ENCODE measurements at regions of chr15 and their contacts with region 1.

Region 1: GRCh38 chr15:51776952-51777574 is 25.7 kb downstream of the TMOD2 start:
- DNase-seq: peak; percentile 79
- ATAC-seq: peak; percentile 75
- H3K4me3 ChIP-seq: no peak overlapping the region
- H3K4me3 Mint-ChIP-seq: no peak overlapping the region
- H3K27ac ChIP-seq: no peak overlapping the region
- H3K27ac Mint-ChIP-seq: no peak overlapping the region
- H3K4me1 ChIP-seq: peaks cover 0 to 4% of the 10 kb centered on the region in 2 donors
- H3K4me1 Mint-ChIP-seq: peaks cover 13% of the 10 kb centered on the region
- H3K27me3 ChIP-seq: no peaks in the 10 kb centered on the region
- H3K27me3 Mint-ChIP-seq: no peaks in the 10 kb centered on the region
- CTCF ChIP-seq: peak; percentile 72

Region 2: DNA sequence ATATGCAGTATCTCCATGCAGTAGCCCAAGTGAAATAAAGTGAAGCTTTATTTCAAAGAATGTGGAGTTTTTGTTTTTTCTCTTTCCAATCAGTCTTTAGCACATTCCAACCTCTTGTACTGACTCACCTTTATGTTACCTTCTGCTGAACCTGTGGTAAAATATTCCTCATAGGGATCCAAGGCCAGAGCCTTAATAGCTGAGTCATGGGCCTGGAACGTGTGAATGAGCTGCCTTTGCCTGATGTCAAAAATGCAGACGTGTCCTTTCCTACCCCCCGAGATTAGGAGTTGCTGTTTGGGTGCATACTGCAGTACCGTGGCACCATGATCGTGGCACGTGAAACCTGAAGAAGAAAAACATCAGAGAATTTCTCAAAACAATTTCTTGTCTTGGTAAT is 327.1 kb before region 1 on chr15:
- CTCF ChIA-PET with region 1: no interaction called
- POLR2A ChIA-PET with region 1: no interaction called
- intact Hi-C with region 1: no loop called
- DNase-seq: no peak
- ATAC-seq: no peak
- H3K4me3 ChIP-seq: no peak overlapping the region
- H3K4me3 Mint-ChIP-seq: no peak overlapping the region
- H3K27ac ChIP-seq: no peak overlapping the region
- H3K27ac Mint-ChIP-seq: no peak overlapping the region
- H3K4me1 ChIP-seq: no peaks in the 10 kb centered on the region
- H3K4me1 Mint-ChIP-seq: no peaks in the 10 kb centered on the region
- H3K27me3 ChIP-seq: no peaks in the 10 kb centered on the region
- H3K27me3 Mint-ChIP-seq: no peaks in the 10 kb centered on the region
- CTCF ChIP-seq: no peak

Region 3: GRCh38 chr15:51622604-51623370 is 154.3 kb before region 1 on chr15 and contains the start of gene DMXL2:
- CTCF ChIA-PET with region 1: interaction called, 20 read pairs
- POLR2A ChIA-PET with region 1: no interaction called
- intact Hi-C with region 1: no loop called
- DNase-seq: peak; percentile 72
- ATAC-seq: peak; percentile 65
- H3K4me3 ChIP-seq: peak within 1 kb of the TSS; percentile 54 to 70 (median 67)
- H3K4me3 Mint-ChIP-seq: peak within 1 kb of the TSS; percentile 88
- H3K27ac ChIP-seq: no peak within 1 kb of the TSS
- H3K27ac Mint-ChIP-seq: peak within 1 kb of the TSS; percentile 50
- H3K4me1 ChIP-seq: peaks cover 17 to 28% of the 10 kb centered on the region in 2 donors
- H3K4me1 Mint-ChIP-seq: peaks cover 28% of the 10 kb centered on the region
- H3K27me3 ChIP-seq: peaks cover 0 to 9% (median 0%) of the 10 kb centered on the region in 4 experiments
- H3K27me3 Mint-ChIP-seq: peaks cover 8% of the 10 kb centered on the region
- CTCF ChIP-seq: no peak
- total RNA-seq, gene DMXL2: 5.6 and 6.2 TPM in 2 replicates

Region 4: DNA sequence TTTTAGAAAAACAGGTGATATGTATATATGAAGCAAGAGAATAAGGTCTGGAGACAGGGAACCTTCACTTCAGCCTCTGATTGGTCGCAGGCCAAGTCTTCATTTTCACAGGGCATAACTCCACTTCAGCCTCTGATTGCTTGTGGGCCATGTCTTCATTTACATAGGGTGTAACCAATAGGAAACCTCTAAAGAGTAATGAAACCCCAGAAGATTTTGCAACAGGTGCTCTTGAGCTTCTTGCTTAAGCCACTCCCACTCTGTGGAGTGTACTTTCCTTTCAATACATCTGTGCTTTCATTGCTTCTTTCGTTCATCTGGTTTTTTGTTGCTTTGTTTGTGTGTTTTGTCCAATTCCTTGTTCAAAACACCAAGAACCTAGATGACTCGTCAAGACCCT is 118.4 kb before region 1 on chr15:
- CTCF ChIA-PET with region 1: interaction called, 728 read pairs
- POLR2A ChIA-PET with region 1: no interaction called
- intact Hi-C with region 1: no loop called
- DNase-seq: no peak
- ATAC-seq: no peak
- H3K4me3 ChIP-seq: no peak overlapping the region
- H3K4me3 Mint-ChIP-seq: no peak overlapping the region
- H3K27ac ChIP-seq: no peak overlapping the region
- H3K27ac Mint-ChIP-seq: no peak overlapping the region
- H3K4me1 ChIP-seq: no peaks in the 10 kb centered on the region
- H3K4me1 Mint-ChIP-seq: no peaks in the 10 kb centered on the region
- H3K27me3 ChIP-seq: no peaks in the 10 kb centered on the region
- H3K27me3 Mint-ChIP-seq: no peaks in the 10 kb centered on the region
- CTCF ChIP-seq: no peak

Region 5: GRCh38 chr15:51681303-51681963 is 95.6 kb before region 1 on chr15 and contains the start of gene SCG3:
- CTCF ChIA-PET with region 1: interaction called, 17 read pairs
- POLR2A ChIA-PET with region 1: no interaction called
- intact Hi-C with region 1: no loop called
- DNase-seq: peak; percentile 62
- ATAC-seq: peak; percentile 61
- H3K4me3 ChIP-seq: no peak within 1 kb of the TSS
- H3K4me3 Mint-ChIP-seq: no peak within 1 kb of the TSS
- H3K27ac ChIP-seq: no peak within 1 kb of the TSS
- H3K27ac Mint-ChIP-seq: no peak within 1 kb of the TSS
- H3K4me1 ChIP-seq: peaks cover 4 to 7% of the 10 kb centered on the region in 2 donors
- H3K4me1 Mint-ChIP-seq: no peaks in the 10 kb centered on the region
- H3K27me3 ChIP-seq: peaks cover 3 to 22% (median 19%) of the 10 kb centered on the region in 4 experiments
- H3K27me3 Mint-ChIP-seq: peaks cover 54% of the 10 kb centered on the region
- CTCF ChIP-seq: no peak
- total RNA-seq, gene SCG3: not detected in 2 replicates

Region 6: DNA sequence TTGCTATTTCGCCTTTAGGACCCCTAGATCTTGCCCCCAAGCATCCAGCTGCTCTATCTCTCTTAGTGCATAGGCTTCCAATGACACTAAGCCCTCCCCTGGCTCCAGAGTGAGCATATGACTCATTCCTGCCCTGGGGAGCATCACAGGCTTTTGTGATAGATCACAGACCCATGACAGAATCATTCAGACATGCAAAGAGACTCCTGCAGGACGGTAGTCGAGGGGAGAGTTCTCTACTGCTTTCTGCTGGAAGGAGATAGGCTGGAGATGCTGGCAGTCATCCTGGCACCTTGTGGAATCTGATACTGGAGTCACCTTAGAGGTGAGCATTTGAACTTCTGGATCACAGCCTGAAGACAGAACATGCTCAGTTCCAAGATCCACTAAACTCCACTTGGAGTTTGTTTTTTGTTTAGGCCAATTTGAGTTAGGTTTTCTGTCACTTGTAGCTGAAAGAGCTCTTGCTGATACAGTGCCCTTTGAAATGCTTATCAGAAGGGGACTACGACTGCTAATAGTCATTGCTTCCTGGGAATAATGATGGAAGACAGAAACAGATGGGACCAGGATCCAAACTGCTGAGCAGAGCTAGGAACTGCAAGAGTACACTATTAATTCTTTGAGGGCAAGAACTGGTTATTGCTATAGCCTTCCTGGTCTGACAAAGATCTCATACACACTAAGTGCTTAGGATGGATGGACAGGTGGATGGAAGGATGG is 50.6 kb before region 1 on chr15:
- CTCF ChIA-PET with region 1: interaction called, 58 read pairs
- POLR2A ChIA-PET with region 1: no interaction called
- intact Hi-C with region 1: loop called (anchors 1 kb)
- DNase-seq: peak; percentile 6
- ATAC-seq: peak; percentile 92
- H3K4me3 ChIP-seq: no peak overlapping the region
- H3K4me3 Mint-ChIP-seq: peak overlapping the region; percentile 32
- H3K27ac ChIP-seq: no peak overlapping the region
- H3K27ac Mint-ChIP-seq: peak overlapping the region; percentile 27
- H3K4me1 ChIP-seq: peaks cover 55 to 66% of the 10 kb centered on the region in 2 donors
- H3K4me1 Mint-ChIP-seq: peaks cover 75% of the 10 kb centered on the region
- H3K27me3 ChIP-seq: no peaks in the 10 kb centered on the region
- H3K27me3 Mint-ChIP-seq: no peaks in the 10 kb centered on the region
- CTCF ChIP-seq: no peak

Region 7: GRCh38 chr15:51737280-51738017 is 39.6 kb before region 1 on chr15 and contains the start of gene LYSMD2:
- CTCF ChIA-PET with region 1: interaction called, 78 read pairs
- POLR2A ChIA-PET with region 1: interaction called, 16 read pairs
- intact Hi-C with region 1: no loop called
- DNase-seq: peak; percentile 82
- ATAC-seq: peak; percentile 67
- H3K4me3 ChIP-seq: peak within 1 kb of the TSS; percentile 68 to 93 (median 73)
- H3K4me3 Mint-ChIP-seq: peak within 1 kb of the TSS; percentile 98
- H3K27ac ChIP-seq: peak within 1 kb of the TSS; percentile 87 to 89
- H3K27ac Mint-ChIP-seq: peak within 1 kb of the TSS; percentile 95
- H3K4me1 ChIP-seq: peaks cover 49 to 53% of the 10 kb centered on the region in 2 donors
- H3K4me1 Mint-ChIP-seq: peaks cover 55% of the 10 kb centered on the region
- H3K27me3 ChIP-seq: no peaks in the 10 kb centered on the region
- H3K27me3 Mint-ChIP-seq: no peaks in the 10 kb centered on the region
- CTCF ChIP-seq: no peak
- total RNA-seq, gene LYSMD2: 48.2 and 49.4 TPM in 2 replicates

Region 8: GRCh38 chr15:51759557-51760070 is 17.4 kb before region 1 on chr15:
- CTCF ChIA-PET with region 1: interaction called, 35 read pairs
- POLR2A ChIA-PET with region 1: no interaction called
- intact Hi-C with region 1: no loop called
- DNase-seq: no peak
- ATAC-seq: no peak
- H3K4me3 ChIP-seq: no peak overlapping the region
- H3K4me3 Mint-ChIP-seq: no peak overlapping the region
- H3K27ac ChIP-seq: no peak overlapping the region
- H3K27ac Mint-ChIP-seq: no peak overlapping the region
- H3K4me1 ChIP-seq: no peaks in the 10 kb centered on the region
- H3K4me1 Mint-ChIP-seq: peaks cover 4% of the 10 kb centered on the region
- H3K27me3 ChIP-seq: no peaks in the 10 kb centered on the region
- H3K27me3 Mint-ChIP-seq: no peaks in the 10 kb centered on the region
- CTCF ChIP-seq: no peak

Region 9: DNA sequence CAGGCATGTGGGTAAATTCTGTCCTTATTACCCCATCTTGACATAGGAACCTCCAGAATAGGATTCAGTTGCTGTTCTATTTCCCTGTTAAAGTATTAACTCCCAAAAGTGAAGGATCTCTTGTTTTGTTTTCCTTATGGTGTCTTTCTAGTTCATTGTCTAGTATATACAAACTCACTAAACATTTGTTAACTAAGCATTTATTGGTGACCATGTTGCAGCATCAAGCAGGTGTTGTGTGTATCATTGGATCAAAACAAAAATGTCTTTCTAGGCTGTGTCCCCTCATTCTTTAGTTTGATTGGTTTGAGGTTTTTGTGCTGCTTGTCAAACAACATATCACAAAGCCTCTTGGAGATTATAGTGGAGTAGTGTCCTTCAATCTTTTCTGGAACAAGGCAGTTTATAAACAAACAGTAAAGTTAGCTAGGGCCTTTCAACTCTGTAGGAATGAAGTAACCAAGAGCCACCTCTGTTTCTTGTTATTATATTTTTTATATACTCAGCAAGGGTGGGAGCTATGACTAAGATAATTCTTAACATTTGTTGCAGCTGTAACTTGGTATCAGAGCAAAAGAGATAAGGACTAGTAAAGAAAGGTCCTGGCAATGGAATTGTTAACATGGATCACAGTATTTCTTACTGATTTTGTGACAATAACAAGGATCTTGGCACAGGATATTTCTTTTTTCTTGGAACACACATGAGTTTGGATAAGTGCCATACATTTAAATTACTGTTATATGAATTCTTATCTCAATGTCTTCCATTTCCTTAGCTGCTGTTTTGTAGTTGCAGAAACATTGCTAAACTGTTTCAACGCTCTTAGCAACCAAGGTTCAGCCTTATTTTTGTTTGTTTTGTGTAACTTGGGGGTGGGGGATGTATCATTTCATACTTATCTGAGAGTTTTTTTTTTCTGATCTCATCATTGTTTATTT is 101.7 kb after region 1 on chr15:
- CTCF ChIA-PET with region 1: no interaction called
- POLR2A ChIA-PET with region 1: no interaction called
- intact Hi-C with region 1: no loop called
- DNase-seq: no peak
- ATAC-seq: no peak
- H3K4me3 ChIP-seq: no peak overlapping the region
- H3K4me3 Mint-ChIP-seq: no peak overlapping the region
- H3K27ac ChIP-seq: no peak overlapping the region
- H3K27ac Mint-ChIP-seq: no peak overlapping the region
- H3K4me1 ChIP-seq: no peaks in the 10 kb centered on the region
- H3K4me1 Mint-ChIP-seq: peaks cover 4% of the 10 kb centered on the region
- H3K27me3 ChIP-seq: no peaks in the 10 kb centered on the region
- H3K27me3 Mint-ChIP-seq: no peaks in the 10 kb centered on the region
- CTCF ChIP-seq: no peak

Region 10: DNA sequence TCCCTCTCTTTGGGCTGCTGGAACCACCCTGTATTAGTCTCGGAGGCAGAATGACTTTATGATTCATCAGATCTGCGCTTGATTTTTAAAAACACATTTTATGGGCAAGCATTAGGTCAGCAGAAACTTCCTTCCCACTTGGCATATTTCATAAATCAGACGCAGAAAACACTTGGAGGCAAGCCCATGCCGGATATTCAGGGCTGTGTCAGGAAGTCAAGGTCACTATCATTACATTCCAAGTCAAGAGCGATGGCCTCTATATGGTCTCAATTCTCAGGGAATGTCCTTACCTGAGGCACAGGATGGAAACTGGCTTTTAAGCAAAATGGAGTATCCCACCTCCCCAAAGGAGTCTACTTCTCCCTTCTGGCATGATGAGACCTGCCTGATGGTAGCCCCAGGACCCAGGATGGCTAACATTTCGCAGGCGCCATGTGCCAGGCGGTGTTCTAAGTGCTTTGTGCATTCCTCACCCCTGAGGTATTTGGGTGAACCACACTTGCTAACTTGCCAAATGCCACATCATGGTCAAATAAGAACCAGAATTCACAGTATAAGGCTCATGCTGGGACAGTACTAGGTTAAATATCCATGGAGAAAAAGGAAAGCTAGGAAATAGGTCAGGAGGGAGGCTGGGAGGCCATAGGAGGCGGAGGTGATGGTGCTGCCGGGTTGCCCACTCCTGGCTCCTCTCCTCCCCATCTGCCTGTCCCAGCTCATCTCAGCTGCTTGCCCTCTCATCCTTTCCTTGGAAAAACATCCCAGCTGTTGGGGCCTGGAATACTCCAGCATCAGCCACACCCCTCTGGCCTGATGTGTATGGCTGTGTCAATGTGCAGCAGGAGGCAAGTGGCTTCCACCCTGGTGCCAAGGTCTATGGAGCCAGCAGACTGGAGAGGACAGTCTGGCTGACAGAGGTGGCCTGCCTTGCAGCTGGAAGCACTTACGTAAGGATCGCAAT is 316.8 kb after region 1 on chr15:
- CTCF ChIA-PET with region 1: no interaction called
- POLR2A ChIA-PET with region 1: no interaction called
- intact Hi-C with region 1: no loop called
- DNase-seq: no peak
- ATAC-seq: no peak
- H3K4me3 ChIP-seq: no peak overlapping the region
- H3K4me3 Mint-ChIP-seq: no peak overlapping the region
- H3K27ac ChIP-seq: no peak overlapping the region
- H3K27ac Mint-ChIP-seq: no peak overlapping the region
- H3K4me1 ChIP-seq: no peaks in the 10 kb centered on the region
- H3K4me1 Mint-ChIP-seq: no peaks in the 10 kb centered on the region
- H3K27me3 ChIP-seq: peaks cover 0 to 4% (median 0%) of the 10 kb centered on the region in 4 experiments
- H3K27me3 Mint-ChIP-seq: peaks cover 9% of the 10 kb centered on the region
- CTCF ChIP-seq: no peak

Measured in B cell (primary cell).